ENCODE measurements at regions of chr7 and their contacts with region 1.

Region 1: DNA sequence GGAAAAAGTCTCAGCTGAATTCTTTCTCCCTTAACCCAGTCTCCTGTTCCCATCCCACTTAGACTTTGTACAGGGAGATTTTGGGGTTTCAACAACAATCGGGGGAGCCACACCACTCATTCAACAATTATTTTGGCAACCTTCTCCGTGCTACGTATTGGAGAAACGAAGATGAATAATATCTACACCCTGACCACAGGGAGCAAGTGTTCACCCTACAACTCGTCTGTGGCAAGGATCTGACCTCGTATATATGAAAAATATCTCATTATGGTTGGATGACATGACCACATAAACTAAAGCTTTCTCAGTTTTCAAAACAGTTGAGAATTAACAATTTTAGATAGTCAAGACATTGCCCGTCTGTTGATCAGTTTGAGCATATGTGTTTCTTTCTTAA is 302.1 kb downstream of the CACNA2D1 start:
- DNase-seq: no peak
- H3K4me3 ChIP-seq: no peak overlapping the region
- H3K27ac ChIP-seq: no peak overlapping the region
- H3K27me3 ChIP-seq: no peaks in the 10 kb centered on the region
- CTCF ChIP-seq: no peak

Region 2: GRCh38 chr7:81659697-81660395 is 481.6 kb before region 1 on chr7:
- CTCF ChIA-PET with region 1: no interaction called
- POLR2A ChIA-PET with region 1: no interaction called
- DNase-seq: no peak
- H3K4me3 ChIP-seq: no peak overlapping the region
- H3K27ac ChIP-seq: no peak overlapping the region
- H3K27me3 ChIP-seq: no peaks in the 10 kb centered on the region
- CTCF ChIP-seq: no peak

Region 3: DNA sequence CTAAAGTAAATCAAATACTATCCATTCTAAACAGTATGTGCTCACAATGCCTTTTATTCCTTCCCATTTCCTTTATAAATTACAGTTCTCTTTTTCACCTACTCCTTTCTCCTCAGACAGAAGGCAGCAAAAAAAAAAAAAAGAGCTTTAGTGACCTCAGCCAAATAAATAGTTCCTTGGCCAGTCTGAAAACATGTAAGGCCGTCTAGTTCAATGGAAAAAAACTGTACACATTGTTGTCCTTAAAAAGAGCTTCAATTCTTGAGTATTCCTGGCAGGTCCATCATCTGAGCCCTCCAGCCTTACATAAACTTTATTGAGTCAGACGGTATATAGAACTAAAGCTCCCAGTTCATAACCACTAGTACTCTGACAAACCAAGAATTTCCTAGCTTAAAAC is 116.8 kb after region 1 on chr7:
- CTCF ChIA-PET with region 1: no interaction called
- POLR2A ChIA-PET with region 1: interaction called, 11 read pairs
- DNase-seq: no peak
- H3K4me3 ChIP-seq: no peak overlapping the region
- H3K27ac ChIP-seq: no peak overlapping the region
- H3K27me3 ChIP-seq: no peaks in the 10 kb centered on the region
- CTCF ChIP-seq: no peak